A549 (cell line): ENCODE measurements at regions of chr20 and their contacts with region 1.

Region 1: GRCh38 chr20:13292201-13292885 is 71.3 kb downstream of the ISM1 start:
- DNase-seq: peak in 1 of 2 experiments; percentile 21
- ATAC-seq: peak; percentile 62 to 67; a peak in 5 of 6 replicates
- H3K4me3 ChIP-seq: no peak overlapping the region
- H3K27ac ChIP-seq: peak overlapping the region; percentile 26 to 59; a peak in 3 of 6 replicates
- H3K4me1 ChIP-seq: peaks cover 12% of the 10 kb centered on the region
- CTCF ChIP-seq: no peak
- EP300 ChIP-seq: no peak
- POLR2A ChIP-seq: no peak
- RAD21 ChIP-seq: no peak

Region 2: DNA sequence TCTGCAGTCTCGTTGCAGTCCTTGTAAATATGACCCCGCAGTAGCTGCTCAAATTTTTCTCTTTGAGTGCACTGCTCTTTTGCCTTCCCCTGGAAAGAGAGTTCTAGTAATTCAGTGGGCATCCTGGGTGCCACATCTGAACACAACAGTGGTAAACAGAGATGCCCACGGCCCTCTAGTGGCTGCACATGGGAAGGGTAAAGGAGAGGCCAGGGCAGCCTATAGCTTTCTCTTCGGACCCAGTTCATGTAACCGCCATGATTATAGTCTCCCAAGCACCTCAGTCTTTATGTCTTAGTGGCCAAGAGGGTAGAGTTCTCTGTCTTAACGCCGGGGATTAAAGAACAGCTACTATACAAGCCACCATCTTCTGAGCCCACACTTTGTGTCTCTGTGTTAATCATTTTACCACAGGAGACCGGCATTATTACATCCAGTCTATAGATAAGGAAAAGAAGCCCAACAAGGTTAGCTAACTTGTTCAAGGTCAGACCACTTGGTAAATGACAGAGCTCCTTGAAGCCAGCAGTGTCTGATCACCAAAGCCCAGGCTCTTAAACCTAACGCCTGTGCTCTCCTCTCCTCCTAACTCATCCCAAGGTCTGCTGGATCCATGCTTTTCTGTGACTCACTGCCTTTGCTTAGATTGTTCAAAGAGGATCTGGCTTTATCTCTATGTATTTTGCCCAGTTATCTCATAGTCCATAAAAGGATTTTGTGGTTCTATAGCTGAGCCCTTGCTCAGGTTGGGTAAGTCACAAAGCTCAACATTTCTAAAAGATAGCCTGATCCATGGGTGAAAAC is 10.5 kb after region 1 on chr20:
- CTCF ChIA-PET with region 1: interaction called, 15 read pairs
- POLR2A ChIA-PET with region 1: no interaction called
- DNase-seq: peak; percentile 44 to 55
- ATAC-seq: peak; percentile 91 to 98
- H3K4me3 ChIP-seq: no peak overlapping the region
- H3K27ac ChIP-seq: no peak overlapping the region
- H3K4me1 ChIP-seq: no peaks in the 10 kb centered on the region
- CTCF ChIP-seq: peak; percentile 53
- EP300 ChIP-seq: no peak
- POLR2A ChIP-seq: no peak
- RAD21 ChIP-seq: peak; percentile 58 to 70

Region 3: GRCh38 chr20:13402171-13402769 is 109.9 kb after region 1 on chr20:
- CTCF ChIA-PET with region 1: no interaction called
- POLR2A ChIA-PET with region 1: no interaction called
- DNase-seq: no peak
- ATAC-seq: no peak
- H3K4me3 ChIP-seq: no peak overlapping the region
- H3K27ac ChIP-seq: no peak overlapping the region
- H3K4me1 ChIP-seq: peaks cover 6% of the 10 kb centered on the region; the same call in 1 of the 3 replicates
- CTCF ChIP-seq: no peak
- EP300 ChIP-seq: no peak
- POLR2A ChIP-seq: no peak
- RAD21 ChIP-seq: no peak